Calu3 (cell line): ENCODE measurements at regions of chr17 and their contacts with region 1.

Region 1: GRCh38 chr17:63116976-63117830 is 151.2 kb downstream of the TANC2 start:
- DNase-seq: peak; percentile 58
- H3K4me3 Mint-ChIP-seq: peak overlapping the region; percentile 12
- H3K27ac Mint-ChIP-seq: peak overlapping the region; percentile 79
- H3K4me1 Mint-ChIP-seq: peaks cover 8% of the 10 kb centered on the region
- H3K27me3 Mint-ChIP-seq: no peaks in the 10 kb centered on the region
- CTCF ChIP-seq: no peak

Region 2: GRCh38 chr17:63171428-63172393 is 54.5 kb after region 1 on chr17:
- CTCF ChIA-PET with region 1: interaction called, 5 read pairs
- intact Hi-C with region 1: loop called (anchors 5 kb)
- DNase-seq: no peak
- H3K4me3 Mint-ChIP-seq: no peak overlapping the region
- H3K27ac Mint-ChIP-seq: peak overlapping the region; percentile 39
- H3K4me1 Mint-ChIP-seq: peaks cover 21% of the 10 kb centered on the region
- H3K27me3 Mint-ChIP-seq: no peaks in the 10 kb centered on the region
- CTCF ChIP-seq: no peak